ENCODE measurements at regions of chr22 and their contacts with region 1.

Region 1: DNA sequence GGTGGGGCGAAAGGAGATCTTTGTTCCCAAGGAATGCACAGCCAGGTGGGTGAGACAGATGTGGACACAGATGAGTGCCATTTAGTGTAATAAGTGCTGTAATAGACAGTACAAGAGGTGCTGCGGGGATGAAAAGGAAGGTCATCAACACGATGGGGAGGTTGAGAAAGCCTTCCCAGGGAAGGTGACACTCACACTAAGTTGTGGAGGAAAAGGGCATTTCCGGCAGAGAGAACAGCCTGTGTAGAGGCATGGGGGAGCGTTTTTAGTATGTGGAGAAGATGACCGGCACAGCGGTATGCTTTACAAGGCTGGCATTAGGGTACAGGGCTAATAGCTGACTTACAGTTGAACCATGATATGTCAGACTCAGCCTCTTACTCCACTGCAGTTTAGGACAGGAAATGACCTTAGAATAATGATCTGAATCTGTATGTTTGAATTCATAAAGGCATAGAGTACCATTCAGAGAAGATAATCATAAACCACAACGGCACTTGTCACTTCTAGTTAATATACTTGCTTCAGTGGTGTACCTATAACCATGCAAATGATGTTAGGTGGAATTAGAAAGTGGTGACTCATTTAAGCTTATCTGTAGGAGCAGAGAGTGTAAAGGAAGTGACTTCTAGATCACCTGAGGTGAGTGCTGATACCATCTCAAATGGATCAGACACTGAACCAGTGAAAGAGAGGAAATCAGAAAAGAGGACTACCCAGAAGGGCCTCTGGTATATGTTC is 60.6 kb downstream of the FAM83F start:
- DNase-seq: no peak
- ATAC-seq: peak in 1 of 8 donors; percentile 10
- H3K4me3 ChIP-seq: no peak overlapping the region
- H3K27ac ChIP-seq: peak overlapping the region in 1 of 10 donors; percentile 34
- H3K4me1 ChIP-seq: peaks cover 0 to 60% (median 35%) of the 10 kb centered on the region in 9 donors
- H3K27me3 ChIP-seq: no peaks in the 10 kb centered on the region
- CTCF ChIP-seq: no peak

Region 2: GRCh38 chr22:40107851-40108378 is 52.6 kb after region 1 on chr22:
- intact Hi-C with region 1: loop called in 2 of 10 experiments (anchors 10 kb)
- DNase-seq: peak in 1 of 2 donors; percentile 10
- ATAC-seq: peak in 6 of 8 donors; percentile 62 to 86 (median 76)
- H3K4me3 ChIP-seq: peak overlapping the region in 8 of 10 donors; percentile 1 to 41 (median 34)
- H3K27ac ChIP-seq: peak overlapping the region in 8 of 10 donors; percentile 13 to 65 (median 45)
- H3K4me1 ChIP-seq: peaks cover 4 to 51% (median 32%) of the 10 kb centered on the region in 9 donors
- H3K27me3 ChIP-seq: no peaks in the 10 kb centered on the region
- CTCF ChIP-seq: no peak

Region 3: DNA sequence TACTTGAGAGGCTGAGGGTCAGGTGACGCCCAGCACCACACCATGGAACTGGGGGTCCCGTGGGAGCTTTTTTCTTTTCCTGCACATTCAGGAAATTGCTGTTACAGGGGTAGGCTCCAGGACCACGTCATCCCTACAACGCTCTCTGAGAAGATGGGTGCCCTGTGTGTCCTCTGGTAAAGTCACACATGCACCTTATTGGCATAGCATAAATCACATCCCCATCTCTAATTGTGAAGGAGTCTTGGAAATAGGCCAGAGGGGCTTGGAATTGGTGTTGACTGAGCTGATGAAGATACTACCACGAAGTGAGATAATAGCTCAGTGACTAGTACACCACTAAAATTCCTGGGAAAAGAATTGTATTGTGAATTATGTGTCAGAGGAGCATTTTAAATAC is 180.0 kb after region 1 on chr22:
- intact Hi-C with region 1: no loop called
- DNase-seq: no peak
- ATAC-seq: peak in 1 of 8 donors; percentile 46
- H3K4me3 ChIP-seq: no peak overlapping the region
- H3K27ac ChIP-seq: no peak overlapping the region
- H3K4me1 ChIP-seq: peaks cover 17 to 78% (median 50%) of the 10 kb centered on the region in 9 donors
- H3K27me3 ChIP-seq: no peaks in the 10 kb centered on the region
- CTCF ChIP-seq: no peak

Measured in heart right ventricle (tissue), 16 donors.